IMR-90 (cell line): ENCODE measurements at regions of chr16 and their contacts with region 1.

Region 1: DNA sequence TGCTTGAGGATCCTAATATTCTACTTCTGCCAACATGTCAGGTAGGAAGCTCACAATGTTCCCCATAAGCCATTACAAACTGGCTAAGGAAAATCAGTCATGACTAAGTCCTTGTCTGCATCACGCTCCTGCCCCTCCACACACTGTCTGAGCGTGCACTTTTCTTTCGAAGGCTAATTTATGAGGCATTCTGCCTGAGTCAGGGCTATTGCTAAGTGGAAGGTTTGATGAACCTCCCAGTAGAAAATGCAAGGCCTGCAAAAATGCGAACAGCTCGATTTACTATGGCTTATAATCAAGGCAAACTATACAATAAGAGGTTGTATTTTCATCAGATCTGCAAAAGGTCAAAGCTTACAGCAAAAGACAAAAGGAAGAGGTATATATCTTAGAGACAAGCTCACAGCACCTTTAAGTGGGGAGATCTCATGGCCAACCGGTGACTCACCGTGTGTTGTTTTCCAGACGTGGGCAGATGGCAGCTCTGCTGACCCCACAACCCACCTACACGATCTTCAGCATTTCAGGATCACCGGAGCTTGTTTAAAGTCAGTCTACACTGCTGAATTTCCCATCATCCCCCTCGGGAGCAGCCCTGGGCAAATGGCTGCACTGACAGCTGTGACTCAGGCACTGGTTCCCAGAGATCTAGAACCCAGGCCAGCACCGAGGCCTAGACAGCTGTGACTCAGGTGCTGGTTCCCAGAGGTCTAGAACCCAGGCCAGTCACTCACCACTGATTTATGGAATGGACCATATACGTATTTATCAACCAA is 26.1 kb downstream of the MEAK7 start:
- DNase-seq: peak; percentile 88
- ATAC-seq: peak; percentile 73
- H3K4me3 ChIP-seq: no peak overlapping the region
- H3K27ac ChIP-seq: no peak overlapping the region
- H3K4me1 ChIP-seq: peaks cover 8% of the 10 kb centered on the region
- H3K27me3 ChIP-seq: no peaks in the 10 kb centered on the region
- CTCF ChIP-seq: no peak
- POLR2A ChIP-seq: no peak
- RAD21 ChIP-seq: no peak

Region 2: GRCh38 chr16:84271866-84272265 is 206.5 kb before region 1 on chr16:
- CTCF ChIA-PET with region 1: interaction called, 3 read pairs
- POLR2A ChIA-PET with region 1: no interaction called
- dilution Hi-C with region 1: no loop called
- in situ Hi-C with region 1: no loop called
- intact Hi-C with region 1: loop called (anchors 2 kb)
- DNase-seq: no peak
- ATAC-seq: no peak
- H3K4me3 ChIP-seq: no peak overlapping the region
- H3K27ac ChIP-seq: no peak overlapping the region
- H3K4me1 ChIP-seq: no peaks in the 10 kb centered on the region
- H3K27me3 ChIP-seq: peaks cover 56% of the 10 kb centered on the region
- CTCF ChIP-seq: no peak
- POLR2A ChIP-seq: no peak
- RAD21 ChIP-seq: no peak

Region 3: DNA sequence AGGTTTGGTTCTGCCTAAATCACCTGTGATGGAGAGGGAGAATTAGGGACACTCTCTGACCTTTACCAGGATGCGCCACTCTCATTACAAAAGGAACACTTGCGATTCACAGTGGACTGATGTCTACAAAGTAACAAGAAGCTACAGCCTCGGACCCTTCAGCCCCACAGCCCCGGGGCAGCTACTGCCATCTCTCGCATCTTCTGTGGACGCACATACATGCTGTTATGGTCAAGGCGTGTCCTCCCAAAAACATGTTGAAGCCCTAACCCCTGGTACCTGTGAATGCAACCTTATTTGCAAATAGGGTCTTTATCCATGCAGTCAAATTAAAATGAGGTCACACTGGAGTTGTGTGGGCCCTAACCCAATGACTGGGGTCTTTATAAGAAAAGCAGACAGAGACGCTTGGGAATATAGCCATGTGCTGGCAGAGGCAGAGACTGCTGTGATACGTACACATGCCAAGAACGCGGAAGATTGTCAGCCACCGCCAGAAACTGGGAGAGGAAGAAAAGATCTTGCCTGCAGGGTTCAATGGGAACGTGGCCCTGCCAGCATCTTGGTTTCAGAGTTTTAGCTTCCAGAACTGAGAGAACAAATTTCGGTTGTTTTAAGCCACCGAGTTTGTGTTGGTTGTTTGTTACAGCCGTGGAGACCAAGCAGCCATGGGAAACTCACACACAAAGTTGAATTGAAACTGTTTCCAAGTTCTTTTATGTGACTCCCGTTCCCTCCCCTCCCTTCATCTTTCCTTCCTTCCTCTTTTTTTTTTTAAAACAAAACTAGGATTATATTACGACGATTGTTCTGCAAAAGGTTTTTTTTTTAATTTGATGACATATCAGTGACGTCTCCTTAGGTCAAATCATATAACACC is 87.0 kb before region 1 on chr16:
- CTCF ChIA-PET with region 1: no interaction called
- POLR2A ChIA-PET with region 1: no interaction called
- dilution Hi-C with region 1: no loop called
- in situ Hi-C with region 1: no loop called
- intact Hi-C with region 1: no loop called
- DNase-seq: peak; percentile 46
- ATAC-seq: peak; percentile 49
- H3K4me3 ChIP-seq: no peak overlapping the region
- H3K27ac ChIP-seq: no peak overlapping the region
- H3K4me1 ChIP-seq: no peaks in the 10 kb centered on the region
- H3K27me3 ChIP-seq: peaks cover 18% of the 10 kb centered on the region
- CTCF ChIP-seq: no peak
- POLR2A ChIP-seq: no peak
- RAD21 ChIP-seq: no peak